ENCODE measurements at regions of chr9 and their contacts with region 1.

Region 1: GRCh38 chr9:82397534-82397933 is 409.0 kb downstream of the SPATA31D1 start:
- DNase-seq: no peak
- H3K4me3 ChIP-seq: no peak overlapping the region
- H3K27ac ChIP-seq: no peak overlapping the region
- H3K4me1 ChIP-seq: no peaks in the 10 kb centered on the region
- H3K27me3 ChIP-seq: no peaks in the 10 kb centered on the region

Region 2: DNA sequence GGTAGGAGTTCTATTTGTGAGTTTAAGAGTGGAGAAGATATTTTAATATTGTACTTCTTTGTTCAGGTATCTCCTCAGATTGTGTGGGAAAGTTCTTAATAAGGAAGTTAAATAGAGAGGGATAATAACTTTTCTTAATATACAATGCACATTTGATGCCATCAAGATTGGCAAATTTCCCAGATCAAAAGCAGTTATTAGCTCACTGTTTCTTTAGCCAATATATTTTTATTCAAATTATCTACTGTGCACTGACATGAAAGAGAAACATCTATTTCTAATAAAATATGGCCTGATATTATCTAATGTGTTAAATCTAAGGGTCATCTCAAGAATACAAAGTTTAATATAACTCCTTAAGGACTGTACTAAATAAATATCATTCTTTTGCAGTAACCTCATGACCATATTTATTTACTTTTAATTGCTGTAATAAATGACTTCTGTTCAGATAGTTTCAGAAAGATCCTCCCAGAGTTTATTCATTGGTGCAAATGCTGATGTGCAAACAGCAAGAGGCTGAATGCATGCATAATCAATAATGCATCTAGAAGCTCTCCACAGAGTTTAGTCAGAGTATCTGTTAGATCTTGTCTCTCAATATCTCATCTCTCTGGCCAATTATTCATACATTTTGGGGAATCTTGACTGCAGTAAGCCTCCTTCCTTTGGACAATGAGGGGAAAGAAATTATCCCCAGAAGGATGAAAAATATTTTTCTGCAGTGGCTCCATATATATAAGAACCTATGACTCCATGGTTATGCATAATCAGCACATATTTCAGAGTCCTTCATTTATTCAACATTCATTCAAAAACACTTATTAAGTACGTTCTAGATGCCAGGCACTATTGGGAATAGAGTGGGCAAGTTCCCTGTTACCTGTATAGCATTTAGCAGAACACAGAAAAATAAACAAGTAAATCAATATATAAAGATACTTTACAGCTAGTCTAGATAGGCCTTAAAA is 323.7 kb before region 1 on chr9:
- in situ Hi-C with region 1: no loop called
- DNase-seq: no peak
- H3K4me3 ChIP-seq: no peak overlapping the region
- H3K27ac ChIP-seq: no peak overlapping the region
- H3K4me1 ChIP-seq: no peaks in the 10 kb centered on the region
- H3K27me3 ChIP-seq: no peaks in the 10 kb centered on the region

Region 3: DNA sequence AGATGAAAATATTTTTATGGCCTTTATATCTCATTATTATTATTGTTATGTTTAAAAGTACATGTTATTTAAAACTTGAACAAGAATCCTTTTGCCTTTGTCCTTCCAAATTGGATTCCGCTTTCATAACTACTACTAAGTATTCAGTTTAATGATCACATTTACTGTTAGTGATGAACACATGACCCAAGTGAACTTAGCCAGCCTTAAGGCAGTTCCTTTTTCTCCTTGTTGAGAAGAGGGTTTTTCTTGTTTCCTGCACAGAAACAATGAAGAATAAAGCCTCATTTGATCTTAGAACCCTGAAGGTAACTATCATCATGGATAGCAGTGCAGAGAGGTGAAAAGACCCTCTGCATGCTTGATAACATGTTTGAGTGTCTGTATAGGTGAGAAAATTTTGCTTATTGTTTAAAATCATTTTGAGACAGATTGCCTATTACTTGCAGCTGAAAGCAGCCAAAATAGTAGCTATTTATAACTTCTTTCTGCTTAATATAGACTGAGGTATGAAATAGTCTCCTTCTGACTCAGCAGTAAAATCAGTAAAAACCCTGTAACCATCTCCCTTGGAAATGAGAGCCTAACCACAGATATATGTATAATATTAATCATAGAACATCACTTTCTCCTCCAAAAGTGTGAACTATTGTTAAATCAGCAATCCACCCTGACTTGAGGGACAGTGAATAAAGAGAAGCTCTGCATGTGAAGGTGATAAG is 142.7 kb before region 1 on chr9:
- in situ Hi-C with region 1: no loop called
- DNase-seq: peak; percentile 43
- H3K4me3 ChIP-seq: no peak overlapping the region
- H3K27ac ChIP-seq: no peak overlapping the region
- H3K4me1 ChIP-seq: peaks cover 13% of the 10 kb centered on the region; the same call in 1 of the 2 replicates
- H3K27me3 ChIP-seq: no peaks in the 10 kb centered on the region

Region 4: DNA sequence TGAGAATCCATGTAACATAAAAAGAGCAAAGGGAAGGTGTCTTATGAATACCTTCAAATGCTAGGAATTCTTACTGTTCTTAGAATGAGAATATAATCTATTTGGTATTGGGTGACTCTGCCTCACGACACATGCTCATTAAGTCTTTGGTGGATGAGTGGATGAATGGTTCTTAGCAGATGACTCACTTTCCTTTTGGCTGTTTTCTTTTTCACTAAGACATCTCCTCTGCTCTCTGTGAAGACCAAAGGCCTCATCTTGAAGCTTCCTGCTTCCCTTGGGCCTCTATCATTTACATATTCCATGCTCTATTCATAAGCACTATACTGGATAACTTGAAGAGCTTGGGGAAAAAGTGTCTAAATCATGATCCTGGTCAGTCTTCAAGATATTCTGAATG is 59.1 kb after region 1 on chr9:
- in situ Hi-C with region 1: loop called (anchors 10 kb)
- DNase-seq: peak; percentile 74
- H3K4me3 ChIP-seq: no peak overlapping the region
- H3K27ac ChIP-seq: no peak overlapping the region
- H3K4me1 ChIP-seq: peaks cover 12% of the 10 kb centered on the region; the same call in 1 of the 2 replicates
- H3K27me3 ChIP-seq: no peaks in the 10 kb centered on the region

Measured in GM23248 (cell line).